PC-3 (cell line): ENCODE measurements at regions of chr22 and their contacts with region 1.

Region 1: DNA sequence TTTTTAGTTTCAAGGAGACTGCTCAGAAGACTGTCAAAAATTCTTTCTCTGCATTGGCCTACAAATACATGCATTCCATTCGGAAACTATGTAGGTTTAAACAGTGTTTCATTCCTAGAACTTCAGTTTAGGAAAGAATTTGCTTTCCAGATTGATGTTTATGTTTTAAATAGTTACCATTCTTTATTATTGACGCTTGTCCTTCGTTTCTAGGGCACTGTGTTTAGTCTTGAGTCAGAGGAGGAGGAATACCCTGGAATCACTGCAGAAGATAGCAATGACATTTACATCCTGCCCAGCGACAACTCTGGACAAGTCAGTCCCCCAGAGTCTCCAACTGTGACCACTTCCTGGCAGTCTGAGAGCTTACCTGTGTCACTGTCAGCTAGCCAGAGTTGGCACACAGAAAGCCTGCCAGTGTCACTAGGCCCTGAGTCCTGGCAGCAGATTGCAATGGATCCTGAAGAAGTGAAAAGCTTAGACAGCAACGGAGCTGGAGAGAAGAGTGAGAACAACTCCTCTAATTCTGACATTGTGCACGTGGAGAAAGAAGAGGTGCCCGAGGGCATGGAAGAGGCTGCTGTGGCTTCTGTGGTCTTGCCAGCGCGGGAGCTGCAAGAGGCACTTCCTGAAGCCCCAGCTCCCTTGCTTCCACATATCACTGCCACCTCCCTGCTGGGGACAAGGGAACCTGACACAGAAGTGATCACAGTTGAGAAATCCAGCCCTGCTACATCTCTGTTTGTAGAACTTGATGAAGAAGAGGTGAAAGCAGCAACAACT is 47.6 kb downstream of the BID start:
- DNase-seq: no peak
- ATAC-seq: no peak
- H3K4me3 ChIP-seq: no peak overlapping the region
- H3K27ac ChIP-seq: no peak overlapping the region
- H3K4me1 ChIP-seq: no peaks in the 10 kb centered on the region
- H3K27me3 ChIP-seq: no peaks in the 10 kb centered on the region
- CTCF ChIP-seq: no peak

Region 2: DNA sequence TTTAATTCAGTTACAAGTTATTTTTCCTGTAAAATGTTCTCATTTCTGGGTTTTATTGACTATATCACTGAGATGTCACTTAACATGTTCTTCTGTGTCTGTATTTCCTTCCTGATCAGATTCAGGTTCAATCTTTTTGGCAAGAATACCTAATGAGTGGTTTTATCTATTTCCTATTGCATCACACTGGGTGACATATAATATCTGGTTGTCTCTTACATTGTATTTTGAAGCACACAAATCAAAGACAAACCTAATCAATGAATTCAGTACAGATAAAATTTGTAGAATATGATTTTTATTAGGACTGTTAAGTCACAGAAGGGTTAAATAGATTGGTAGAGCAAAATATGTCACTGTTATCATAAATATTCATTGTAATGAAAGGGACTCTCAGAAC is 27.7 kb before region 1 on chr22:
- CTCF ChIA-PET with region 1: interaction called, 12 read pairs
- POLR2A ChIA-PET with region 1: no interaction called
- intact Hi-C with region 1: no loop called
- DNase-seq: no peak
- ATAC-seq: no peak
- H3K4me3 ChIP-seq: no peak overlapping the region
- H3K27ac ChIP-seq: no peak overlapping the region
- H3K4me1 ChIP-seq: 0 out of 2 replicates have a peak, but pooled peaks cover 5% of the 10 kb centered on the region
- H3K27me3 ChIP-seq: no peaks in the 10 kb centered on the region
- CTCF ChIP-seq: no peak